ENCODE measurements at regions of chr6 and their contacts with region 1.

Region 1: DNA sequence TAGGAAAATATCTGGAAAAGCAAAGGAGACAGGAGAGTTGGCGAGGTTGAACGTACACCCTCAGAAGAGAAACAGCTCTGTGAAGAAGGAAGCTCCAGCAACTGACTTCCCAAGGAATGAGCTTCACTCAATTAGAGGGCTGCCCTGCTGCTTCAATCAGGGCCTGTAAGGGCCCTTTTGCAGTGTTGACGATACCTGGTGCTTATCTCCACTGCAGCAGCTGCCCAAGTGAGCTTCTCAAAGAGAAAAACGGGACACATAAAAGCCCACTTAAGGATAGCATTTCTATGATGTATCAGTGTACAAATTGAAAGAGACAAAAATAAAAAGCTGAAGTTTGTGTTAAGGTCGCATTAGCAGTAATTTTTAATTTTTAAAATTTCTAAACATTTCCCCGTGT is 16.4 kb downstream of the SEC63 start:
- DNase-seq: no peak
- H3K4me3 ChIP-seq: no peak overlapping the region
- H3K27ac ChIP-seq: no peak overlapping the region
- H3K4me1 ChIP-seq: no peaks in the 10 kb centered on the region
- H3K27me3 ChIP-seq: no peaks in the 10 kb centered on the region
- CTCF ChIP-seq: no peak
- EP300 ChIP-seq: no peak
- POLR2A ChIP-seq: no peak
- RAD21 ChIP-seq: no peak

Region 2: DNA sequence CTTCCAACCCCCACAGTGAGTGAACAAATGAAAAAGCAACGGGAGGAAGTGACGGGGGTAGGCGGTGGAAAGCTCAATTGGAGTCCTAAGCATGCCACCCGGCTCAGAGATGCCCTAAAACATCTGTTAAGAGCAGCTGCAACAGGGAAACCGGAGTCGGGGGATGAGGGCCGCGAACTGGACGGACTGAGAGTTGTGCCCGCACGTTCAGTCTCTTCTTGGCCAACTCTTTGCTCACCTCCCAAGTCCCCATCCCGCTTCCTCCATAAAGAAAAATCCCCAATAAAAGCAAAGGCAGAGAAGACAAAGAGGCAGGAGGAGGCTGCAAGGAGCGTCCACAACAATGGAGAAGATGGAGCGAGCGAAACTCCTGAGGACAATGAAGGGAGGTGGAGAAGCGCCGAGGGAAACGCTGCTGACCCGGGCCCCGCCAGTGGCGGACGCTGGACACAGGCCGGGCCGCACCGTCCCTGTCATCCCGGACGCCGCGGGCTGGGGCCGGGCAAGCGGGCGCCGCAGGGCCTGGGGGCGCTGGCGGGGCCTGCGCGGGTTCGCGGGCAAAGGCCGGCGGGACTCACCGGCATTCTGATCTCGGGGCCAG is 15.8 kb after region 1 on chr6:
- CTCF ChIA-PET with region 1: interaction called, 3 read pairs
- POLR2A ChIA-PET with region 1: interaction called, 13 read pairs
- DNase-seq: peak in 1 of 2 experiments; percentile 77
- H3K4me3 ChIP-seq: peak overlapping the region; percentile 85 to 92 (median 88)
- H3K27ac ChIP-seq: peak overlapping the region; percentile 75
- H3K4me1 ChIP-seq: peaks cover 0 to 5% (median 0%) of the 10 kb centered on the region in 4 experiments; a peak in 1 of 7 replicates
- H3K27me3 ChIP-seq: no peaks in the 10 kb centered on the region
- CTCF ChIP-seq: no peak
- EP300 ChIP-seq: no peak
- POLR2A ChIP-seq: peak in 1 of 2 experiments; percentile 14; a peak in 2 of 3 replicates
- RAD21 ChIP-seq: no peak

Measured in H1 (cell line).